ENCODE measurements at regions of chr18 and their contacts with region 1.

Region 1: DNA sequence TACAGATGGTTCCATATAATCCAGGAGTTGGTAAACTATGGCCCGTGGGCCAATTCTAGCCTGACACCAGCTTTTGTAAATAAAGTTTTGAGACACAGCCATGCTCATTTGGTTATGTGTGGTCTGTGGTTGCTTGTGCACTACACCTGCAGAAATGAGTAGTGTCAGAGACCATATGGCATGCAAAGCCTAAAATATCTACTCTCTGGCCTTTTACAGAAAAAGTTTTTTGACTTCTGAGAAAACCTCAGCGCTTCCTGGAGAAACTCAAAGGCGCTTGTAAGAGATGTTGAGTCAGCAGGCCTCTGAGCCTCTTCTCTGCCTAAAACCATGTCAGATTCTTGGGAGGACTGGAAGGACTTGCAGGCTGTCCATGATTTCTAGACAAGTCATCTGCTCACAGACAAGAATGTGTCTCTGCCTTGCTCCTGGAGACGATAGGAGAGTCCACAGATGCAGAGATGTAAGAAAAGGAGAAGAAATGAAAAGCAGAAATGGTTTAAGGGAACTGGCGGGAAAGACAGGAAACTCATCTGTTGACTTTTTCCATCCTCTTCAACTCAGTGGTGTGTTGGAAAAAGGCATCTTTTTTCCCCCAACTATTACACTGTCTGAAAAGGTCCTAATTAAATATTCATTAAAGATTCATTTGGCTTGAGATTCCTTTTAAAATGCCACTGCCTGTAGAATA is 5.2 kb downstream of the TTC39C start:
- DNase-seq: peak; percentile 81
- H3K4me3 Mint-ChIP-seq: peak overlapping the region; percentile 64
- H3K27ac Mint-ChIP-seq: peak overlapping the region; percentile 94
- H3K4me1 Mint-ChIP-seq: peaks cover 83% of the 10 kb centered on the region
- H3K27me3 Mint-ChIP-seq: no peaks in the 10 kb centered on the region

Region 2: DNA sequence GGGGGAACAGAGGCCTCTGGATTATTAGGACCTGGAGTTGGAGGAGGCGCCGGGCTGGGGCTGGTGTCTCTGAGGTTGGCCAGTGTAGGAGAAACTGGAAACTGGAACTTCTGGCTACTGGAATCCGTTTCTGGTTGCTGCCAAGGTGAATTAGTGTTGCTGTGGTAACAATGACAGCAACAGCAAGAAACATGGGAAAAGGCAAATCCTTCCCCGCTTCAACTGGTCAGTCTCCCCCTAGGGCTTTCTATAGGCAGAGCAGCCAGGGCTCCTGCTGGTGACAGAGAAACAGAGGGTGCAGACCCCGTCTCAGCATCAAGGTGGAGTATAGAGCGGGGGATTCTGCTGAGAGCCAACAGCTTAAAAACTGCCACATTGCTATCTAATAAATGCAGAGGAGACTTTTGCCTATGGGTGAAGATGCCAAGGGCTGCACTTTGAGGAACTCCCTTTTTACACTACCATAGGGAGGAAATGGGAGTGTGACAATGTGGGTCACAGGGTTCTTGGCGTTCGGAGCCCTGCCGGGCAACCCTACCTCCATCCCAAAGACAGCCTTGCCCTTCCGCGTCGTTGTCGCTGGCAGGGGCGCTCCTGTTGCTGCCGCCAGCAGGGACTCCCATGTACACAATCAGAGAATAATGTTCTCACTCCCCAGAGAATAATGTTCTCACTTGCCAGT is 965.9 kb before region 1 on chr18:
- CTCF ChIA-PET with region 1: no interaction called
- intact Hi-C with region 1: no loop called
- DNase-seq: no peak
- H3K4me3 Mint-ChIP-seq: no peak overlapping the region
- H3K27ac Mint-ChIP-seq: no peak overlapping the region
- H3K4me1 Mint-ChIP-seq: peaks cover 14% of the 10 kb centered on the region
- H3K27me3 Mint-ChIP-seq: no peaks in the 10 kb centered on the region

Region 3: DNA sequence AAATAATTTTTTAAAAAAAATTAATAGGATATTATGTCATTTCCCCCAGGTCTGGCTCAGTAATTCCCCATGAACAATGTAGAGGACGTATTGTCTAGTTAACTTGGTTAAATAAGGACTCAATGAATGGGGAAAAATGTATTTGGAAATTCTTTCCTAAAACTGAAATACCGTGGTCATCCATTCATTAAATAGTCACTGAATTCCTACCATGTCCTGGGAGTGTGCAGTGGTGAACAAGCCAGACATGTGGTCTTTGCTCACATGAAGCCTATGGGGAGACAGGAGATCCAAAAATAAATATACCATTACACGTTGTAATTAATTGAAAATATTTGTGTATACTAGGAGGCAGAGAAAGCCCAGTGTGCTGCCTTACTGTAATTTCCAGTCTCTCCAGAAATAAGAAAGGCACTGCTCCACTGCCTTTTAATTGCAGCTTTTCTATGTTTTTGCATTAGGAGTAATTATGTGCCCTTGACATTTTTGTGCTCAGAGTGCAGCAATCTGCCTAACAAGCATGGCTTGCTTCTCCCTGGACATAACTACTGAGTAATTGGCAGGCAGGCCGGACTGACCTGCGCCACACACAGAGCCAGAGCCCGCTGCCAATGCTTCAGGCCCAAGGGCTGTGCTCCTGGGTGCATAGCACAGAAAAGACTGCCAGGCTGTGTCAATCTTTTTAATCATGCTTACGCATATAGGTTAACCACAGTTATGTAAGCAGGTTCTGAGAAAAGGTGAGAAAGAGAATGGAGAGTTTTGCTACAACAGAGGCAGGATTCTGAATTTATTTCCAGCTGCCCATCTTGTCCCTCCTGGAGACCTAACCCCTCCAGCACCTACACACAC is 27.5 kb before region 1 on chr18:
- CTCF ChIA-PET with region 1: no interaction called
- intact Hi-C with region 1: loop called (anchors 2 kb)
- DNase-seq: peak; percentile 58
- H3K4me3 Mint-ChIP-seq: no peak overlapping the region
- H3K27ac Mint-ChIP-seq: no peak overlapping the region
- H3K4me1 Mint-ChIP-seq: peaks cover 50% of the 10 kb centered on the region
- H3K27me3 Mint-ChIP-seq: no peaks in the 10 kb centered on the region

Region 4: GRCh38 chr18:24043403-24043802 is 23.6 kb after region 1 on chr18:
- CTCF ChIA-PET with region 1: no interaction called
- intact Hi-C with region 1: no loop called
- DNase-seq: no peak
- H3K4me3 Mint-ChIP-seq: no peak overlapping the region
- H3K27ac Mint-ChIP-seq: no peak overlapping the region
- H3K4me1 Mint-ChIP-seq: peaks cover 56% of the 10 kb centered on the region
- H3K27me3 Mint-ChIP-seq: no peaks in the 10 kb centered on the region

Region 5: DNA sequence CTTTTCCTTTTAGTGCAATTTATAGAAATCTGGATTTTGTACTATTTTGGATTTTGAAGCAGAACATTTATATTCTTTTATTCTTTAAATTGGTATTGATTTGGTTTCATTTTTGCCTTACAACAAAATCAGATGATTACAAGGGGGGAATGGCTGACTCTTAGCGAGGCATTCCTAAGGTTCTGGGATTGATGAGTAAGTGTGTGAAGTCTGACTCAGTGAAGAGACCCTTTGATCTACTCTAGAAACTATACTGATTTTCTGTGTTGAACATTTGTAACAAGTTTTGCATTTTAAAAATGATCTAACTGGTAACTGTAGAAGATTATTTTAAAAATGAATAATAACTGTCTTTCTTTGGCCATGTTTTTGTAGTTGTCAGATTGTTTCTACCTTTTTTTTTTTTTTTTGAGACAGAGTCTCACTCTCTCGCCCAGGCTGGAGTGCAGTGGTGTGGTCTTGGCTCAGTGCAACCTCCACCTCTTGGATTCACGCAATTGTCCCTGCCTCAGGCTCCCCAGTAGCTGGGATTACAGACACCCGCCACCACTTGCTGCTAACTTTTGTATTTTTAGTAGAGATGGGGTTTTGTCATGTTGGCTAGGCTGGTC is 43.4 kb after region 1 on chr18:
- CTCF ChIA-PET with region 1: no interaction called
- intact Hi-C with region 1: loop called (anchors 1 kb)
- DNase-seq: peak; percentile 47
- H3K4me3 Mint-ChIP-seq: no peak overlapping the region
- H3K27ac Mint-ChIP-seq: peak overlapping the region; percentile 7
- H3K4me1 Mint-ChIP-seq: peaks cover 53% of the 10 kb centered on the region
- H3K27me3 Mint-ChIP-seq: no peaks in the 10 kb centered on the region

Region 6: GRCh38 chr18:24462838-24463775 is 443.3 kb after region 1 on chr18:
- CTCF ChIA-PET with region 1: no interaction called
- intact Hi-C with region 1: no loop called
- DNase-seq: no peak
- H3K4me3 Mint-ChIP-seq: no peak overlapping the region
- H3K27ac Mint-ChIP-seq: no peak overlapping the region
- H3K4me1 Mint-ChIP-seq: no peaks in the 10 kb centered on the region
- H3K27me3 Mint-ChIP-seq: peaks cover 3% of the 10 kb centered on the region